K562 (cell line): ENCODE measurements at regions of chr2 and their contacts with region 1.

Region 1: DNA sequence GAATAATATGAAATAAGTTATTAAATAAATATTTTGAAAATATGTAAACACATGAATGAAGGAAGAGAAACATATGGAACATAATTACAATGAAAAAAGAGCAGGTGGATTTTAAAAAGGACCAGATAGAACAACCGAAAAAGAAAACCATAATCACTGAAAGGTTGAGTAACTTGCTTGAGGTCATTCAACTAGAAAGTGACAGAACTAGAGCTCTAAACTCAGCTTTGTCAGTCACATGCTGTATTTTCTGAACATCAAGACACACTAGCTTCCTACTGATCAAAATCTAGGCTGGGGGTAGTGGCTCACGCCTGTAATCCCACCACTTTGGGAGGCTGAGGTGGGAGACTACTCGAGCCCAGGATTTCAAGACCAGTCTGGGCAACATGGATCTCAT is 30.0 kb upstream of the ITGAV start:
- DNase-seq: no peak
- ATAC-seq: no peak
- H3K4me3 ChIP-seq: no peak overlapping the region
- H3K27ac ChIP-seq: no peak overlapping the region
- H3K4me1 ChIP-seq: no peaks in the 10 kb centered on the region; a peak in 1 of 5 replicates
- H3K27me3 ChIP-seq: no peaks in the 10 kb centered on the region
- CTCF ChIP-seq: no peak
- EP300 ChIP-seq: no peak
- POLR2A ChIP-seq: no peak
- RAD21 ChIP-seq: no peak

Region 2: GRCh38 chr2:186485871-186486650 is 73.8 kb before region 1 on chr2 and contains the start of gene ZC3H15:
- CTCF ChIA-PET with region 1: no interaction called
- POLR2A ChIA-PET with region 1: no interaction called
- in situ Hi-C with region 1: no loop called
- intact Hi-C with region 1: no loop called
- DNase-seq: peak; percentile 98 to 99 (median 98)
- ATAC-seq: peak; percentile 86
- H3K4me3 ChIP-seq: peak within 1 kb of the TSS; percentile 75
- H3K27ac ChIP-seq: peak within 1 kb of the TSS; percentile 90
- H3K4me1 ChIP-seq: peaks cover 2 to 28% of the 10 kb centered on the region in 2 experiments; a peak in 3 of 5 replicates
- H3K27me3 ChIP-seq: no peaks in the 10 kb centered on the region
- CTCF ChIP-seq: peak in 1 of 3 experiments; percentile 4; a peak in 1 of 6 replicates
- EP300 ChIP-seq: peak; percentile 48; the same call in 1 of the 2 replicates
- POLR2A ChIP-seq: peak; percentile 98
- RAD21 ChIP-seq: no peak
- polyA plus RNA-seq, gene ZC3H15: 182 to 186 TPM

Region 3: DNA sequence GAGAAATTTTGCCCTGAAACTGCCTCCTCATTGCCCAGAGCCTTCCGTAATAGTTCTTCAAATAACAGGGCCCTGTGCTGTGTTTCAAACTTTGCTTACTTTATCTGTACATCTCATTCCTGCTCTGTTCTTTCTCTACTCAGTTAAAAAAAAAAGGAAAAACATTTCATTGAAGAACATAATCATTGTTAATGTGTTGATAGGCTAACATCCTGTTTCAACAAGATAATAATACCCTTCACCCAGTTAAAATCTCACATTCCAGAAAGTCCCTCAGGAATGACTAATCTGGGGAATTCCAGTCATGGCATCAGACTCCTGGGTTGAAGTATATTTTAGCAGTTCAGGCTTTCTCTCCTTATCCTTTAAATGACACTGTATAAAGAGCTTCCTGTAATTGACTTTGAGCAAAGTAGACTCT is 15.6 kb before region 1 on chr2:
- CTCF ChIA-PET with region 1: no interaction called
- POLR2A ChIA-PET with region 1: interaction called, 10 read pairs
- in situ Hi-C with region 1: no loop called
- intact Hi-C with region 1: no loop called
- DNase-seq: no peak
- ATAC-seq: no peak
- H3K4me3 ChIP-seq: no peak overlapping the region
- H3K27ac ChIP-seq: no peak overlapping the region
- H3K4me1 ChIP-seq: no peaks in the 10 kb centered on the region
- H3K27me3 ChIP-seq: no peaks in the 10 kb centered on the region; a peak in 1 of 5 replicates
- CTCF ChIP-seq: no peak
- EP300 ChIP-seq: no peak
- POLR2A ChIP-seq: no peak
- RAD21 ChIP-seq: no peak

Region 4: GRCh38 chr2:187415444-187415843 is 855.6 kb after region 1 on chr2:
- CTCF ChIA-PET with region 1: no interaction called
- POLR2A ChIA-PET with region 1: no interaction called
- in situ Hi-C with region 1: no loop called
- intact Hi-C with region 1: no loop called
- DNase-seq: no peak
- ATAC-seq: no peak
- H3K4me3 ChIP-seq: no peak overlapping the region
- H3K27ac ChIP-seq: no peak overlapping the region
- H3K4me1 ChIP-seq: no peaks in the 10 kb centered on the region
- H3K27me3 ChIP-seq: no peaks in the 10 kb centered on the region
- CTCF ChIP-seq: no peak
- EP300 ChIP-seq: no peak
- POLR2A ChIP-seq: no peak
- RAD21 ChIP-seq: no peak

Region 5: DNA sequence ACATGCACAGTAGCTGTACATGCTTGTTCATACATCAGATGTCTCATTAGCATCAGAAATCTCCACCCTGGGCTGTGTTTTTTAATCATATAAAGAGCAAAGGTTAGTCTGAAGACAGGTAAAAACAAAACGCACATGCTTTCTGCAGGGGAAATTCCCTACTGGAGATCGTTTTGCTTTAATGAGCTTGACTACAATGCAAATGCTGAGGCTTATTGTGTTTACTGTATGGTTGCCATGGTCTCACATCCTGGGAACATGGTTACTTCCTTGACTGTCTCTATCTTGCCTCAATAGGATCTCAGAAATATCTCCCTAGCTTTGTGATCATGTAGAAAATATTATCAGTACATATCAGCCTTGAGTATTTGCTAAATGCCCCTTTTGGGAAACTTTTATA is 1330.8 kb after region 1 on chr2:
- CTCF ChIA-PET with region 1: no interaction called
- POLR2A ChIA-PET with region 1: no interaction called
- in situ Hi-C with region 1: no loop called
- intact Hi-C with region 1: no loop called
- DNase-seq: no peak
- ATAC-seq: no peak
- H3K4me3 ChIP-seq: no peak overlapping the region
- H3K27ac ChIP-seq: no peak overlapping the region
- H3K4me1 ChIP-seq: no peaks in the 10 kb centered on the region
- H3K27me3 ChIP-seq: no peaks in the 10 kb centered on the region
- CTCF ChIP-seq: no peak
- EP300 ChIP-seq: no peak
- POLR2A ChIP-seq: no peak
- RAD21 ChIP-seq: no peak